Esophagus muscularis mucosa (tissue), 4 donors: ENCODE measurements at regions of chr11 and their contacts with region 1.

Region 1: DNA sequence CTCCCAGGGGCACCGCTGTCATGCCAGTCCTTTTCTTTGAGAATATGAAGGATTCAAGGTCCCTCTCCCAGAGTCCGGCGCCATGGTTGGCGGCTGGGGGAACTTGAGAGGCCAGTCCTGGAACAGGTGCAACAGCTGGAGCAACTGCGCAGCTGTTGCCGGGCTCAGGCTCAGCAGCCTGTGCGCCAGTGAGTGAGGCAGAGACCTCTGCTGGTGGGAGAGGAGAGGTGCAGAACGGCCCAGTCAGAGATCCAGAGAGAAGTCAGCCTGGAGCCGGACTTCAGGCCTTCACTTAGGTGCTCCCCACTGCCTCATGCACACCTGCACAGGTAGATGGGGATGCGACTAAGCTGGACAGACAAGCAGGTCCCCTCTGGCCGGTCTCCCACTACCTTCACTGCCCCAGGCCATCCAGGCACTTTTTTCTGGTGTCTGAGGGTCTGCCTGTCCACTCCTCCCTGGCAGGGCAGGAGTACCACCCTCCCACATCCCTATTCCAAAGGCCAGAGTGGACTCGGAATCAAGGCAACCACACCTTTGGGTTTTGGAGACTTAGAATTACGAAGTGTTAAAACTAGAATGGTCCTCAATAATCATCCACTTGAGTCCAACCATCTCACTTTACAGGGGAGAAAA is 4.6 kb downstream of the CHRDL2 start:
- DNase-seq: no peak
- H3K4me3 ChIP-seq: no peak overlapping the region
- H3K27ac ChIP-seq: peak overlapping the region; percentile 54 to 73 (median 70)
- H3K4me1 ChIP-seq: peaks cover 19 to 40% (median 35%) of the 10 kb centered on the region in 4 donors
- H3K27me3 ChIP-seq: peaks cover 0 to 13% (median 1%) of the 10 kb centered on the region in 4 donors
- CTCF ChIP-seq: peak; percentile 95 to 99 (median 95)
- EP300 ChIP-seq: no peak
- POLR2A ChIP-seq: no peak

Region 2: DNA sequence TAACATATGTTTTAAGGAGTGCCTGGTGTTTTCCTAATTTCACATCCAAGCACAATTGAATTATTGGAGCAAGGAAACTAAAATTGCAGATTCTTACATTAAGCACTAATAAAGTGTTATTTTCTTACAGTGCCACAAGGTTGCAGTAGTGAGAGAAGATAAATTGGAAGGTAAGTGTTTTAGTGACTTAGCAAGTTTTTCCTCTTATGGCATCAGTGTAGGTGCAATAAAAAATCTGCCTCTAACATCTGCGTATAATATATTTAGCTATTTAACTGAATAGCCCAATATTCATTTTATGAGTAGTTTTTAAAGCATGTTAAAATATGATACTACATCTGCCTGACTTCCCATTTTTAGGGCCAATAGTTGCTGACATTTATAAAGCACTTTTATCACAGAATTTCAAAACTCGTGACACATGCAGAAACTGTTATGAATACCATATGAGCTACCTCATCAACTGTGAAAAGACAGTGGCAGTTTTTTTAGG is 115.2 kb before region 1 on chr11:
- intact Hi-C with region 1: loop called (anchors 5 kb)
- DNase-seq: no peak
- H3K4me3 ChIP-seq: no peak overlapping the region
- H3K27ac ChIP-seq: peak overlapping the region; percentile 69 to 80 (median 78)
- H3K4me1 ChIP-seq: peaks cover 9 to 32% (median 29%) of the 10 kb centered on the region in 4 donors
- H3K27me3 ChIP-seq: no peaks in the 10 kb centered on the region
- CTCF ChIP-seq: peak; percentile 52 to 75 (median 56)
- EP300 ChIP-seq: no peak
- POLR2A ChIP-seq: no peak

Region 3: GRCh38 chr11:74702383-74703007 is 24.2 kb before region 1 on chr11:
- intact Hi-C with region 1: loop called (anchors 2 kb)
- DNase-seq: no peak
- H3K4me3 ChIP-seq: no peak overlapping the region
- H3K27ac ChIP-seq: no peak overlapping the region
- H3K4me1 ChIP-seq: peaks cover 3 to 13% (median 11%) of the 10 kb centered on the region in 4 donors
- H3K27me3 ChIP-seq: no peaks in the 10 kb centered on the region
- CTCF ChIP-seq: peak; percentile 83 to 94 (median 92)
- EP300 ChIP-seq: no peak
- POLR2A ChIP-seq: no peak